ENCODE measurements at regions of chr15 and their contacts with region 1.

Region 1: GRCh38 chr15:59993950-59994401 is 10.1 kb upstream of the FOXB1 start:
- DNase-seq: no peak
- ATAC-seq: no peak
- H3K4me3 Mint-ChIP-seq: no peak overlapping the region
- H3K27ac Mint-ChIP-seq: peak overlapping the region in 2 of 10 donors; percentile 62 to 65
- H3K4me1 Mint-ChIP-seq: peaks cover 9 to 38% (median 21%) of the 10 kb centered on the region in 4 donors
- H3K27me3 Mint-ChIP-seq: peaks cover 51 to 94% (median 70%) of the 10 kb centered on the region in 5 donors

Region 2: DNA sequence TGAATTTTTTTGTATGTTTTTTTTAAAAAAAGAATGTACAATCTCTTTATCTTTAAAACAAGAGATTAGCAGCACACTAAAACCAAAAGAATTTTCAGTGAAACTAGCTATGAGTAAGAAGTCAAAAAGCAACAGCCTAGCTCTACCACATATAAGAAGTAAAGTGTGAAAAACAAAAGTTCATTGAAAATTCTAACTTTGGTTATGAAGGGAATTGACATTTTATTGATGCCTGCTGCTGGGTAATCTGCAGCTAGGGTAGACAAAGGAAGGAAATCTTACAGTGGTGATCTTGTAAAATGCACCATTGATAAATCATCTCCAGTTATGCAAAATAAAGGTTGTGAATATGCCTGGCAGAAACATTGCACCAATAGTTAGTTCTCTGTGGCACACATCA is 27.7 kb before region 1 on chr15:
- POLR2A ChIA-PET with region 1: no interaction called
- DNase-seq: no peak
- ATAC-seq: no peak
- H3K4me3 Mint-ChIP-seq: no peak overlapping the region
- H3K27ac Mint-ChIP-seq: no peak overlapping the region
- H3K4me1 Mint-ChIP-seq: no peaks in the 10 kb centered on the region
- H3K27me3 Mint-ChIP-seq: peaks cover 0 to 12% (median 6%) of the 10 kb centered on the region in 5 donors

Region 3: DNA sequence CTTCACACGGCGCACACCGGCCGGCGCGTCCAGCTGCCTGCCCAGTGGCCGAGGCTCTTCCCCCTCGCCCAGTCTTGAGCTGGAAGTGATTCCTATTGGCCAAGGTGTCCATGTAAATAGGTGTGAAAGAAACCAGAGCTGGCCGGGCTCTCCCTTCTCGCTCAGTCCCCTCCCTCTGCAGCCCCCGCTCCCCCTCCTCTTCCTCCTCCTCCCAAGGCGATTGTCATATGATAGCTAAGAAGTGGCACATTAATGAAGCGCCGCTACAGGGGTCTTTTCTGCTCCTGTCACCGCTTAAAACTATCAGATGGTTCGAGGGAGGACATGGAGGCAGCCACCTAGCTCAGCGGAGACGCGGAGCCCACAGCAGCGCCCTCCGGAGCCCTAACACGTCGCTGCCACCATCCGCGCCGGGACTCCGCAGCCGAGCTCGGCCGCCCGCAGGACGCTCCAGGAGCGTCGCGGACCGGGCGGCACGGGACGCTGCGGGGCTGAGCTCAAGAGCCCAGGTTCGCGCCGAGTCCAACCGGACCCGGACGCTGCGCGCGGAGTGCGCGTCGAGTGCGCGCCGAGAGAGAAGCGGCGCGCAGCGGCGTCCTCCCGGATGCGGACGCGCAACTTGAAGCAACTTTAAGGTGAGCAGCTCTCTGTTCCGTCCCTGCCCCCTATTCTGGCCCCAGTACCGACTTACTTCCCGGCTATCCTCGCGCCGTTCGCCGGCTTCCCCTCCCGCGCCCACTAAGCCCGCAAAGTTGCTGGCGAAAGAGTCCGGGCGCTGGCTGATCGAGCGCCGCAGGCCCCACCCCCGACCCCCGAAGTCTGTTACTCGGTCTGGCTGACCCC is 10.3 kb after region 1 on chr15 and contains the start of gene FOXB1:
- POLR2A ChIA-PET with region 1: interaction called, 18 read pairs
- DNase-seq: peak in 1 of 10 donors; percentile 31
- ATAC-seq: peak; percentile 20 to 34
- H3K4me3 Mint-ChIP-seq: peak within 1 kb of the TSS; percentile 82 to 96 (median 91)
- H3K27ac Mint-ChIP-seq: peak within 1 kb of the TSS in 6 of 10 donors; percentile 31 to 75 (median 64)
- H3K4me1 Mint-ChIP-seq: peaks cover 23 to 66% (median 38%) of the 10 kb centered on the region in 4 donors
- H3K27me3 Mint-ChIP-seq: peaks cover 62 to 99% (median 75%) of the 10 kb centered on the region in 5 donors
- polyA plus RNA-seq, gene FOXB1: 0.09 to 0.25 TPM in 2 of 3 donors, not detected in the other

Region 4: DNA sequence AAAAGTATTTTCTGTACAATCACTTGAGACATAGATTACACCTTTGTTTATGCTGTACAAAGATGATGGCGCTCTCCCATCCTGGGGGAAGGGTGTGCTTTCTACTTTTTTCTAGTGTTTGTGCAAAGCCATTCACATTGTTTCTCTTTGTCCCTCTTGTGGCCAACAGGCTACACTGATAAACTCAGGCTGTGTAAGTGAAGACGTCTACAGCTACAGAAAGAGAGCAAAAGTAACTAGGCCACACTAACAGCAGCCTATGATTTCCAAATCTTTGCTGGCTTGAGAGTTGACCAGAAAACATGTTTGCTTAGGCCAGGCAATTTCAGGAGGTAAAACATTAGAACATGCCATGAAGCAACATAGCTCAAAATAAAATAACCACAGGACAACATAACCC is 85.2 kb after region 1 on chr15:
- POLR2A ChIA-PET with region 1: no interaction called
- DNase-seq: no peak
- ATAC-seq: no peak
- H3K4me3 Mint-ChIP-seq: no peak overlapping the region
- H3K27ac Mint-ChIP-seq: no peak overlapping the region
- H3K4me1 Mint-ChIP-seq: peaks cover 13 to 25% (median 19%) of the 10 kb centered on the region in 4 donors
- H3K27me3 Mint-ChIP-seq: peaks cover 0 to 3% (median 0%) of the 10 kb centered on the region in 5 donors

Measured in naive thymus-derived CD8-positive, alpha-beta T cell (primary cell).